ENCODE measurements at regions of chr9 and their contacts with region 1.

Region 1: DNA sequence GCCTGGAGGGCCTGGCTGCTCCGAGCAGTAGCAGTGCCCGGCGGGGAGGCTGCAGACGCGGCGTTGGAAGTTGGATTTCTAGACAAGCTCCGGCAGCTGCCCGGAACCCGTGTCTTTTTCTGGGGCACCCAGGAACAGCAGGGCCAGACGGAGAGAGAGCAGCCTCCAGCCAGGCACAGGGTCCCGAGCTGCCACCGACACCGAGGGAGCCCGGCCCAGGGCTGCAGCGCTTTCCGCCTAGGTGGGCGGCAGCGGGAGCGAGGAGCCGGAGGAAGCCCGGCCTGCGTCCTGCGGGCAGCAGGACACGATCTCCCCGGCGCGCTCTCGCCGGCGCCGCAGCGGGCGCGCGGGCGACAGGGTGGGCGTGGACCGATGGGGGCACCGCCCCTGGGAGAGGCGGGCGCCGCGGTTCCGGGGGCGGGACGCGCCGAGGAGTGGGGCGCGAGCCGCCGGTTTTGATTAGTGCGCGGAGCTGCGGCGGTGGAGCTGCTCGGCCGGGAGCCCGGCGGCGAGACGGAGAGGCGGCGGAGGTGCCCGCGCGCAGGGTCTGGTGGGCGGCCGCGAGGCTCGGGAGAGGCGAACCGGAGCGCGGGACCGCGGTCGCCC is at the start of gene UGCG:
- DNase-seq: peak; percentile 89 to 94
- H3K4me3 ChIP-seq: peak within 1 kb of the TSS; percentile 78
- H3K4me3 Mint-ChIP-seq: no peak within 1 kb of the TSS
- H3K27ac Mint-ChIP-seq: peak within 1 kb of the TSS; percentile 94
- H3K4me1 ChIP-seq: peaks cover 33% of the 10 kb centered on the region
- H3K4me1 Mint-ChIP-seq: no peaks in the 10 kb centered on the region
- H3K27me3 ChIP-seq: no peaks in the 10 kb centered on the region
- H3K27me3 Mint-ChIP-seq: no peaks in the 10 kb centered on the region
- CTCF ChIP-seq: no peak
- total RNA-seq, gene UGCG: 25.0 and 26.7 TPM in 2 replicates

Region 2: DNA sequence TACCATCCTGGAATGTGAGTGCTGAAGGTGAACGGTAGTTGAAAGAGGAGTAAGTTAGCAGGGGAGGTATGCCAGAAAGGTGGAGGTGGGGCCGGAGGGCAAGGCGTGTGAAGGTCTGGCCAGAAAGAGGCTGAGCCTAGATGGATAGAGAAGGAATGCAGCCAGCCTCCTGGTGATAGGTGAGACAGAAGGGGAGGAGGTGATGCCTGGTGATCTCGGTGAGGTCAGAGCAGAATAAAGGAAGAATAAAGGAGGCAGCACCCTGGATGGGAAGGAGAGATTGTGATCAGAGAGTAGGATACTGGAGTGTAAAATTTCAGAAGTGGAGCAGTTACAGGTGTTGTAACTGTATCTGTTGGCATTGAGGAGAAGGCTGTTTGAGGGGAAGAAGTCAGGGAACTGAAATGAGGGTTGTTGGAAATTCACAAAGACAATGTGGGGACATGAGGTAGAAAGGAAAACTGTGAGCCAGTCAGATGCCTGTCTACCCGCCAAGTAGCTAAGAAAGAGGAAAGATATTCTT is 233.1 kb before region 1 on chr9:
- CTCF ChIA-PET with region 1: no interaction called
- POLR2A ChIA-PET with region 1: no interaction called
- intact Hi-C with region 1: no loop called
- DNase-seq: peak; percentile 88 to 94
- H3K4me3 ChIP-seq: no peak overlapping the region
- H3K4me3 Mint-ChIP-seq: peak overlapping the region; percentile 69
- H3K27ac Mint-ChIP-seq: peak overlapping the region; percentile 83
- H3K4me1 ChIP-seq: peaks cover 19% of the 10 kb centered on the region
- H3K4me1 Mint-ChIP-seq: peaks cover 25% of the 10 kb centered on the region
- H3K27me3 ChIP-seq: no peaks in the 10 kb centered on the region
- H3K27me3 Mint-ChIP-seq: no peaks in the 10 kb centered on the region
- CTCF ChIP-seq: no peak

Region 3: GRCh38 chr9:111759762-111760639 is 136.5 kb before region 1 on chr9:
- CTCF ChIA-PET with region 1: no interaction called
- POLR2A ChIA-PET with region 1: no interaction called
- intact Hi-C with region 1: loop called (anchors 5 kb)
- DNase-seq: peak; percentile 54 to 70
- H3K4me3 ChIP-seq: no peak overlapping the region
- H3K4me3 Mint-ChIP-seq: no peak overlapping the region
- H3K27ac Mint-ChIP-seq: no peak overlapping the region
- H3K4me1 ChIP-seq: no peaks in the 10 kb centered on the region
- H3K4me1 Mint-ChIP-seq: no peaks in the 10 kb centered on the region
- H3K27me3 ChIP-seq: no peaks in the 10 kb centered on the region
- H3K27me3 Mint-ChIP-seq: no peaks in the 10 kb centered on the region
- CTCF ChIP-seq: peak; percentile 48 to 77

Region 4: DNA sequence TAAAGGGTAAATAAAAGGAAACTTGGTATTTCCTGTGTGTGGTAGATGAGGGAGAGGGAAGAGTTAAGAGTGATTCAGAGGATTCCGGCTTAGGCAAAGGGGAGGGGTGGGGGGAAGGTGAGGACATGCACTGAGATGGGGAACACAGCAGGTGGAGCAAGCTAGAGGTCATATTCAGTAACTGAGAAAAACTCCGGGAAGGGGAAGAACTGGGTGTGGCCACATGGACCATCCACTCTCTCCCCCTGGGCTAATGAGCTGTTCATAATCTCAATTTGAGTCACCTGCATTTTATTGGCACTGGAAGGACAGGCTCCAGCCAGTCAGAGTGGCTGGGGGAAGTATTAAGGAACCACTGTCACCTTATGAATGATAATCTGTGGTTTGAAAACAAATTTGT is 44.9 kb before region 1 on chr9:
- CTCF ChIA-PET with region 1: interaction called, 3 read pairs
- POLR2A ChIA-PET with region 1: no interaction called
- intact Hi-C with region 1: loop called (anchors 5 kb)
- DNase-seq: peak; percentile 55 to 82
- H3K4me3 ChIP-seq: no peak overlapping the region
- H3K4me3 Mint-ChIP-seq: no peak overlapping the region
- H3K27ac Mint-ChIP-seq: no peak overlapping the region
- H3K4me1 ChIP-seq: peaks cover 38% of the 10 kb centered on the region
- H3K4me1 Mint-ChIP-seq: peaks cover 22% of the 10 kb centered on the region
- H3K27me3 ChIP-seq: no peaks in the 10 kb centered on the region
- H3K27me3 Mint-ChIP-seq: no peaks in the 10 kb centered on the region
- CTCF ChIP-seq: no peak

Region 5: GRCh38 chr9:111870774-111871498 is 25.5 kb before region 1 on chr9:
- CTCF ChIA-PET with region 1: no interaction called
- POLR2A ChIA-PET with region 1: no interaction called
- intact Hi-C with region 1: loop called (anchors 1 kb)
- DNase-seq: no peak
- H3K4me3 ChIP-seq: no peak overlapping the region
- H3K4me3 Mint-ChIP-seq: no peak overlapping the region
- H3K27ac Mint-ChIP-seq: no peak overlapping the region
- H3K4me1 ChIP-seq: peaks cover 40% of the 10 kb centered on the region
- H3K4me1 Mint-ChIP-seq: peaks cover 27% of the 10 kb centered on the region
- H3K27me3 ChIP-seq: no peaks in the 10 kb centered on the region
- H3K27me3 Mint-ChIP-seq: no peaks in the 10 kb centered on the region
- CTCF ChIP-seq: no peak